ENCODE measurements at regions of chr11 and their contacts with region 1.

Region 1: GRCh38 chr11:76721755-76722677 is 51.5 kb upstream of the LRRC32 start:
- DNase-seq: peak; percentile 79
- CTCF ChIP-seq: peak; percentile 84

Region 2: DNA sequence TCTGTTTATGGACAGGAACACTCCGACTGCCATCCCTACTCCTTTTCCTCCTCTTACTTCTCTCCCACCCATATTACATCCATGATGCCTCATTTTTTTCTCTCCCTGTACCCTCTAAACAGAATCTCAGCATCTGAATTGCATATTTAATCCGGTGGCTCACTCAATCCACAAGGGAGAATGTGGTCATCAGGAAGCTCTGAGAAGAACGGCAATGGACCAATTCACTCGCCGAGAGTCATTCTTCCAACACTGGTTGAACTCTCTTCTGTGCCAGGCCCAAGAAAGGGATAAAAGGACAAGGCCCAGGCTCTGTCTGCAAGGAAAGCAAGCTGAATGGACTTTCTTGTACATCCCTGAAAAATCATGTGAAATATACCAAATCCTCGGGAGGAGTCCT is 1069.1 kb before region 1 on chr11:
- CTCF ChIA-PET with region 1: no interaction called
- POLR2A ChIA-PET with region 1: no interaction called
- DNase-seq: no peak
- CTCF ChIP-seq: no peak

Region 3: DNA sequence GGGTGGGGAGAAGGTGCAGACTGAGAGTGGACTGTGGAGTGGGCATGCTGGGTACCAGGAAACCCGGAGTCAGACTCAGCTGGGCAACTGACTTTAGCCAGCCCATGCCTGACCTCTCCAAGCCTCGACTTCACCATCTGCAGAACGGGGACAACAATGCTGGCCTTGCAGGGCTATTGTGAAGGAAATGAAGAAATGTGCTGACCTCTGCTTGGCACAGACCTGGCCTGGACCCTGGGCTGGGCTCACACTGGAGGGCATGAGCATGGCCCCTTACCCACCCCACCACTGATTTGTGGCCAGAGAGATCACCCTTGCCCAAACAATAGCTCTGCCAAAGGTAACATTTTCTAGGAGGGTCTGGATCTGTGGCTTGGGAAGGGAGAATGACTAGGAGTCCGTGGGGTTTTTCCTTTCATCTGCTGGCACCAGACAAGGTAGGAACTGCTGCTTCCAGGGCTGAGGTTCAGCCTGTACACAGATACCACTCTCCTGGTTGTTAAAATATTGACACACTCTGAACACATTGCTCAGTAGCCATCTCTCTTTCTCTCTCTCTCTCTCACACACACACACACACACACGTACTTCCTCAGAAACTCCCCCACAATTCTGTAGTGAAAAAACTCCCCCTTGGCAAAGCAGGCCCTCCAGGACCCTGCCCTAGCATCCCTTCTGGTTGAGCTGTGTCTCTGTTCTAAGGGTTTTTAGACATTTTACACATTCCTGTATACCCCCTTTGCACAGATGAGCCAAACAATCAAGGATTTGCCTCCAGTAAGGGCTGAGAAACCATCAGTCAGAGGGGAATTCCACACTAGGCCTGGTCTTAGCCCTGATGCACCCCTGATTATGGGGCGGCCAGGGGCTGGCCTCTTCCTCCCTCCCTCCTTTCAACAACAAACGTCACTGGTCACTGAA is 1003.3 kb before region 1 on chr11:
- CTCF ChIA-PET with region 1: no interaction called
- POLR2A ChIA-PET with region 1: no interaction called
- DNase-seq: peak; percentile 57
- CTCF ChIP-seq: no peak

Region 4: GRCh38 chr11:76701122-76702040 is 20.6 kb before region 1 on chr11:
- CTCF ChIA-PET with region 1: interaction called, 12 read pairs
- POLR2A ChIA-PET with region 1: no interaction called
- DNase-seq: no peak
- CTCF ChIP-seq: no peak

Region 5: DNA sequence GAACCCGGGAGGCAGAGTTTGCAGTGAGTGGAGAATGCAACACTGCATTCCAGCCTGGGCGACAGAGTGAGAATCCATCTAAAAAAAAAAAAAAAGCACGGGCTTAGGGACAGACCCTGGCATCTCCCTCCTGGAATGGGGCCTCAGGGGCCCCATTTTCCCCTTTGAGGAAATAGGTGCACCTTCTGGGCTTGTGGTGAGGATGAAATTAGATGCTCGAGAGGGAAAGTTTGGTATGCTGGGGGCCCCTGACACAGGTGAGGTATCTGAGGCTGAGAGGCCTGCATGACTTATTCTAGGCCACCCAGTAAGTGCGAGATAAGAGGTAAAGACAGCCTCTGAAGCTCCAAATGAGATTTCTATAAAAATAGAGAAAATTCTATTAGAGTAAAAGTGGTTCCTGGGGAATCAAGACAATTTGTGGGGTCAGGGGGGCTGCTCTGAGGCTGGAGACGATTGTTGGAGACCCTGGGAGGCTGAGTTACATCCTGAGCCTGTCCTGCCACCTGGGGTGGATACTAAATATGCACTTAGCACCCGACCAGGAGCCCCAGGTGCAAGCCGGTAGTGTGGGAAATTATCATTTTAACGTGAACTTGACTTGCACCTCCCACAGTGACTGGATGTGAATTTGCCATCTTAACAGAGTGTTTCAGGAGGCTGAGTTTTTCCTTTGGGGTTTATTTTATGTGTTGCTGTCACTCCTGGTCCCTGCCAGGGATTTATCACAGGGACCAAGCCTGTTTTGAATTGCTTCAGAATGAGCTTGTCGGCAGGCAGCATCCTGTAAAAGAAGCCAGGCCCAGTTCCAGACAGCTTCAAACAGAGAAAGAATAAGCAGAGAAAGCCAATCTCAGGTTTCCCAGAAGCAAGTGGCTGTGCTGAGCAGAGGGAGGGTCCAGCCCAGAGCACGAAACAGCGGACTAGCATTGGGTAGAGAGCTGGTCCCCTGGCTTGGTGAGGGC is 12.7 kb after region 1 on chr11:
- CTCF ChIA-PET with region 1: interaction called, 66 read pairs
- POLR2A ChIA-PET with region 1: no interaction called
- DNase-seq: no peak
- CTCF ChIP-seq: no peak

Region 6: GRCh38 chr11:76767659-76768058 is 45.6 kb after region 1 on chr11:
- CTCF ChIA-PET with region 1: no interaction called
- POLR2A ChIA-PET with region 1: no interaction called
- DNase-seq: no peak
- CTCF ChIP-seq: no peak

Region 7: DNA sequence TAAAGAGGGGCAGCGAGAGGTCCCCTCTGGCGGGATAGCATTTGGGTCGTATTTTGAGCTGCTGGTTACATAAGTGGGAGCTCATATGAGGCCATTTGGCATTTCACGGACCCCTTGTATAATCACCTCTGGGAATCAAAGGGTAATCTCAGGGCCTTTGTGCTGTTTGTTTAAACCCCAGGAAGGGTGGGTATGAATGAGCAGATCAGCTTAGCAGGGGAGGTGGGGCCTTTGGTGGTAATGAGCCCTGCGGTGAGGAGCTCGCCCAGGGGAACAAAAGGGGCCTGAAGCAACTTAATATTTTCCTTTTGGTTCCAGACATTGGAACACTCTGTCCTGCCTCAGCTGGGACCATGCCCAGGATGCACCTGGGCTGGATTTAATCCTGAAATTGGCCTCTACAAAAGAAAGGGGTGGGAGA is 71.4 kb after region 1 on chr11:
- CTCF ChIA-PET with region 1: interaction called, 13 read pairs
- POLR2A ChIA-PET with region 1: no interaction called
- DNase-seq: no peak
- CTCF ChIP-seq: no peak

Region 8: GRCh38 chr11:76799066-76799804 is 77.2 kb after region 1 on chr11:
- CTCF ChIA-PET with region 1: interaction called, 13 read pairs
- POLR2A ChIA-PET with region 1: interaction called, 11 read pairs
- DNase-seq: peak; percentile 90
- CTCF ChIP-seq: peak; percentile 89

Region 9: DNA sequence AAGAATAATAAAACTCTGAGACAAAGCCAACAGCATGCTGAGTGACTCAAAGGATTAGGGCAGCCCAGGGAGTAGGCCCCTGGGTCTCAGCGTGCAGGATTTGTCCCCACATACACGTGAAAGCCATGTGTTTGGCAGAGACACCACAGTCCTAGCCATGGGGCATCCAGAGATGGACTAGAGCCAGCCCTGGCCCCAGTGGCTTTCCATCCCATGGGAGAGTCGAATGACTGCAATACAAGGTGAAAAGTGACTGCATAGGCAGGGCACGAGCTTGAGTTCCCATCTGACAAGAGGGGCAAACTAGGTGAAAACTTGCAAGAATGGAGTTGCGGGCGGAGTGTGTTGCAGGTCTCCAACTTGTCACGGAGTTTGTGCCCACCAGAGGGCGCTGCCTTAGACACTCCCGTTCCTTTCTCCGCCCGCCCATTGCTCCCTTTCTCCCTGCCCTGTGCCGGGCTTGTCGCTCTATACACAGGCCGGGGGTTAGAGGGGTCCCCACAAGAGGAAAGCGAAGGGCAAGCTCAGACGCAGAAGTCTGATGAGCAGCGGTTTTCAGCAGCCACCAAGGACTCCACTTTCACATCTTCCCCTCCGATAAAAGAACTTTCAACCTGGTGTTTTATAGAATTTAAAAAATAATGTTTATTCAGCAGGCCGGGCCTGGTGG is 85.3 kb after region 1 on chr11:
- CTCF ChIA-PET with region 1: interaction called, 12 read pairs
- POLR2A ChIA-PET with region 1: interaction called, 11 read pairs
- DNase-seq: peak; percentile 79
- CTCF ChIP-seq: peak; percentile 72

Measured in GM10248 (cell line).